ENCODE measurements at regions of chr16 and their contacts with region 1.

Region 1: DNA sequence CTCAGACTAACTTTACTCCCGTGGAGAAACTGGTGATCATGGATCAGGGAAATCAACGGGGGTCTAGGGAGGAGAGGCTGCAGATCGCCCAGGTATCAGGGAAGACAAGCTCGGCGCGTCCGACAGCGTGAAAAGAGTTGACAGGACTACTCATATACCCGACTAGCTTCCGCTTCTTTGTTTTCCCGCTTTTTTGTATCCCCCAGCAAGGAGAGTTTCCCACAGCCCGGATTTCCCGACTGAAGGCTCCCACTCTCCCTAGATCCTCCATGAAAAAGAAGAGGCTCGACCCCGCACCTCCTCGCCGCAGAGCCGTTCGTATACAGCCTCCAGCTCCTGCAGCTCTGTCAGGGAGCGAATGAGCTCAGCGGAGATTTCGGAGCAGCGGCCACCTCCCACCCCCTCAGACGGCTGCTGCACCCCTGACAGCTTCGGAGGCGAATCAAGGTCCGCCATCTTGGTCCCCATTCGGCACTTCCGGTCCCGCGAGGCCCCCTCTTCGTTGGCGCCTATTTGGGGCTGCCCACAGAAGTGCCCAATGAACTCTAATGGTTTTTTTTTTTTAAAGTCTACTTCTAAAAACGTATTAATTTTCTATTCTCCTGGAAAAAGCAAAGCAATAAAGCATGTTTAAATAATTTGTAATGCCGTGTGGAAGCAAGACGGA is at the start of gene COG4:
- DNase-seq: peak; percentile 85 to 88 (median 86)
- H3K4me3 ChIP-seq: peak within 1 kb of the TSS; percentile 84 to 99 (median 96)
- H3K4me3 Mint-ChIP-seq: peak within 1 kb of the TSS; percentile 96 to 99
- H3K27ac ChIP-seq: peak within 1 kb of the TSS; percentile 81 to 97
- H3K27ac Mint-ChIP-seq: peak within 1 kb of the TSS; percentile 94 to 99 (median 97)
- H3K4me1 ChIP-seq: peaks cover 34 to 50% of the 10 kb centered on the region in 2 donors
- H3K4me1 Mint-ChIP-seq: peaks cover 48% of the 10 kb centered on the region
- H3K27me3 ChIP-seq: no peaks in the 10 kb centered on the region
- H3K27me3 Mint-ChIP-seq: peaks cover 0 to 4% (median 1%) of the 10 kb centered on the region in 3 donors
- CTCF ChIP-seq: no peak
- polyA plus RNA-seq, gene COG4: 37.6 to 40.6 (median 40.1) TPM

Region 2: GRCh38 chr16:70380861-70381603 is 142.2 kb before region 1 on chr16:
- intact Hi-C with region 1: loop called (anchors 5 to 10 kb)
- DNase-seq: peak; percentile 93 to 97 (median 95)
- H3K4me3 ChIP-seq: peak overlapping the region; percentile 42 to 84 (median 72)
- H3K4me3 Mint-ChIP-seq: peak overlapping the region; percentile 89 to 97
- H3K27ac ChIP-seq: peak overlapping the region; percentile 50 to 72
- H3K27ac Mint-ChIP-seq: peak overlapping the region; percentile 60 to 93 (median 88)
- H3K4me1 ChIP-seq: peaks cover 23 to 30% of the 10 kb centered on the region in 2 donors
- H3K4me1 Mint-ChIP-seq: peaks cover 25% of the 10 kb centered on the region
- H3K27me3 ChIP-seq: no peaks in the 10 kb centered on the region
- H3K27me3 Mint-ChIP-seq: peaks cover 0 to 3% (median 1%) of the 10 kb centered on the region in 3 donors
- CTCF ChIP-seq: peak; percentile 29

Region 3: GRCh38 chr16:70407811-70408274 is 115.4 kb before region 1 on chr16:
- intact Hi-C with region 1: no loop called
- DNase-seq: no peak
- H3K4me3 ChIP-seq: no peak overlapping the region
- H3K4me3 Mint-ChIP-seq: no peak overlapping the region
- H3K27ac ChIP-seq: no peak overlapping the region
- H3K27ac Mint-ChIP-seq: no peak overlapping the region
- H3K4me1 ChIP-seq: peaks cover 28 to 42% of the 10 kb centered on the region in 2 donors
- H3K4me1 Mint-ChIP-seq: peaks cover 45% of the 10 kb centered on the region
- H3K27me3 ChIP-seq: no peaks in the 10 kb centered on the region
- H3K27me3 Mint-ChIP-seq: peaks cover 5 to 7% (median 6%) of the 10 kb centered on the region in 3 donors
- CTCF ChIP-seq: no peak

Region 4: GRCh38 chr16:70576431-70577255 is 53.4 kb after region 1 on chr16:
- intact Hi-C with region 1: no loop called
- DNase-seq: peak; percentile 32 to 83 (median 41)
- H3K4me3 ChIP-seq: no peak overlapping the region
- H3K4me3 Mint-ChIP-seq: peak overlapping the region in 1 of 2 donors; percentile 56
- H3K27ac ChIP-seq: peak overlapping the region in 1 of 2 donors; percentile 37
- H3K27ac Mint-ChIP-seq: peak overlapping the region in 4 of 7 donors; percentile 60 to 79 (median 70)
- H3K4me1 ChIP-seq: peaks cover 14 to 17% of the 10 kb centered on the region in 2 donors
- H3K4me1 Mint-ChIP-seq: peaks cover 21% of the 10 kb centered on the region
- H3K27me3 ChIP-seq: no peaks in the 10 kb centered on the region
- H3K27me3 Mint-ChIP-seq: no peaks in the 10 kb centered on the region
- CTCF ChIP-seq: no peak

Measured in CD14-positive monocyte (primary cell).